Lower leg skin (tissue), 4 donors: ENCODE measurements at regions of chr11 and their contacts with region 1.

Region 1: DNA sequence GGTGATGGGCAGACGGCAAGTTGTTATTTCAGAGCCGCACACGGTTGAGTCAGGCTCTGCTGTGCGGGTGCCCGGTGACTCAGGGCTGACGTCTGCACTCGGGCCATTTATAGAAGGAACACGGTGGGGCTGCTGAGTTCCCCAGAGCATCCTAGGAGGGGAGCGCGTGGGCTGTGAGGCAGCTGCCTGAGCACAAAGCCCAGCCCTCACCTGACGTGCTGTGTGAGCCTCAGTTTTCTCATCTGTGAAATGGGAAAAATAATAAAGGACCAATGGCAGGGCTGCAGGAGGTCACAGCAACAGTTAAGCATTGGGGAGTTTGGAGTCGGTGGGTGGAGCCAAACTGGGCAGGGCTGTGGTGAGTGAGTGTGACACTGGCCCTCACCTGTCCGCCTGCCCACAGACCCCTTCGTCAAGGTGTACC is 11.3 kb upstream of the RHOD start:
- DNase-seq: no peak
- H3K4me3 ChIP-seq: no peak overlapping the region
- CTCF ChIP-seq: no peak
- POLR2A ChIP-seq: no peak

Region 2: GRCh38 chr11:66958956-66959274 is 86.4 kb before region 1 on chr11:
- intact Hi-C with region 1: loop called (anchors 1 kb)
- DNase-seq: no peak
- H3K4me3 ChIP-seq: no peak overlapping the region
- CTCF ChIP-seq: no peak
- POLR2A ChIP-seq: no peak

Region 3: GRCh38 chr11:67060111-67060522 is 14.8 kb after region 1 on chr11:
- intact Hi-C with region 1: no loop called
- DNase-seq: no peak
- H3K4me3 ChIP-seq: no peak overlapping the region
- CTCF ChIP-seq: no peak
- POLR2A ChIP-seq: no peak

Region 4: DNA sequence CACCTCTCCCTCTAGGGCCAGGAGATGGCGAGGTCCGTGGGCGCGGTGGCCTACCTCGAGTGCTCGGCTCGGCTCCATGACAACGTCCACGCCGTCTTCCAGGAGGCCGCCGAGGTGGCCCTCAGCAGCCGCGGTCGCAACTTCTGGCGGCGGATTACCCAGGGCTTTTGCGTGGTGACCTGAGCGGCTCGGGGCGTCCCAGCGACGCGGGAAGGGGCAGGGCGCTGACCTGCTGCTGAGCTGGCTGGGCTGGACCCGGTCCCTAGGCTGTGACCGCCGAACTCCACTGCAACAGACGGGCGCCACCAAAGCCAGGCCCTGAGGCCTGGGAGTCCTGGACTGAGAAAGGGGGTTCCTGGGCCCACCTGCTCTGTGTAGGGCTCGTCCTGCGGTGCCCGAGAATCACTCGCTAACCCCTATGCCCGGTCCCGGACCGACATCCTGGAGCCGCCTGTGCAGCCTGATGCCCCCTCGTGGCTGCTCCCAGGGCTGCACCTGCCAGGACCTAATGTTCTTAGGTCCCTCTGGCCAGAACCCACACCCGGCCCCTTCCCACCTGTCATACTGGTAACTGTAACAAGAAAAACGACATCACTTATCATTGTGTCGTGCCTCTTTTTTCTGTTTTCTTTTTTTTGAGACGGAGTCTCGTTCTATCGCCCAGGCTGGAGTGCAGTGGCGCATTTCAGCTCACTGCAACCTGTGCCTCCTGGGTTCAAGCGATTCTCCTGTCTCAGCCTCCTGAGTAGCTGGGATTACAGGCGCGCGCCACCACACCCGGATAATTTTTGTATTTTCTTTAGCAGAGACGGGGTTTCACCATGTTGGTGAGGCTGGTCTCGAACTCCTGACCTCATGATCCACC is 26.3 kb after region 1 on chr11:
- intact Hi-C with region 1: loop called (anchors 1 kb)
- DNase-seq: peak in 1 of 2 donors; percentile 92
- H3K4me3 ChIP-seq: no peak overlapping the region
- CTCF ChIP-seq: no peak
- POLR2A ChIP-seq: no peak